Caco-2 (cell line): ENCODE measurements at regions of chr1 and their contacts with region 1.

Region 1: DNA sequence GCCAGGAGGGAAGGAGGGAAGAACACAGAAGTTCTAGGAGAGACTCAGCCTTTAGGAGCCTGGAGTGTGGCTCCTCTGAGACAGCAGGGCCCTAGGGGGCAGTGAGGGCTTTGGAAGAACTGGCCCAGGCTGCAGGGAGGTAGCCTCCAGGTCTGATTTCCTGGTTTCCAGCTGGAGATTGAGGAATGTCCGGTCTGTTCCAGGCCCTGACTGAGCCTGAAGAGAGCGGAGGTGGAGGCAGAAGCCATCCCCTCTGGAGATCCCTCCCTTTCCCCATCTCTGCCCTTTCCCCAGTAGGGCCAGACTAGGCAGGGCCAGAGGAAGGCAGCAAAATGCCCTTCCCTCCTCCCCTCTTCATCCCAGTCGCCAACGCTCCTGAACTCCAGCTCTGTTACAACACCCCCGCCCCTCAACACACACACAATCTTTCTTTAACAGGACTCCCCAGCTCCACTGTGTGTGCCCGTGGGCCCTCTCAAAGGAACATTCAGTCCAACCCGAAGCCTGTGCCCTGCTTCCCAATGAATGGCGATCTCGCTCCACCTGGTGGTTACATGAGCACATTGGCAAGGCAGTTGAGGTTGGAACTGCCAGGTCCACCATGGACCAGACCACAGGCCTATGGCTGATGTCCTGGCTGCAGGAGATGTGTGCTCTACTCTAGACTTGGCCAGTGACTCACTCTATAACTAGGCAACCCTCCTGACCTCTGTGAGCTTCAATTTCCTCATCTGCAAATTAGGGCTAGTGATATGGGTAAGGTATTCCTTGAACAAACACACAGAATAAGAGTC is 32.0 kb downstream of the MAP7D1 start:
- DNase-seq: peak; percentile 74 to 80
- H3K4me3 ChIP-seq: no peak overlapping the region
- H3K4me3 Mint-ChIP-seq: peak overlapping the region; percentile 37
- H3K27ac Mint-ChIP-seq: peak overlapping the region; percentile 76
- H3K4me1 ChIP-seq: no peaks in the 10 kb centered on the region
- H3K4me1 Mint-ChIP-seq: peaks cover 7% of the 10 kb centered on the region
- H3K27me3 ChIP-seq: no peaks in the 10 kb centered on the region
- H3K27me3 Mint-ChIP-seq: no peaks in the 10 kb centered on the region
- CTCF ChIP-seq: peak; percentile 61 to 73

Region 2: GRCh38 chr1:36099681-36100341 is 88.2 kb before region 1 on chr1:
- CTCF ChIA-PET with region 1: interaction called, 4 read pairs
- POLR2A ChIA-PET with region 1: no interaction called
- intact Hi-C with region 1: loop called (anchors 1 kb)
- DNase-seq: peak; percentile 73 to 78
- H3K4me3 ChIP-seq: no peak overlapping the region
- H3K4me3 Mint-ChIP-seq: no peak overlapping the region
- H3K27ac Mint-ChIP-seq: no peak overlapping the region
- H3K4me1 ChIP-seq: no peaks in the 10 kb centered on the region
- H3K4me1 Mint-ChIP-seq: no peaks in the 10 kb centered on the region
- H3K27me3 ChIP-seq: no peaks in the 10 kb centered on the region
- H3K27me3 Mint-ChIP-seq: no peaks in the 10 kb centered on the region
- CTCF ChIP-seq: peak; percentile 78 to 79

Region 3: GRCh38 chr1:36239941-36240637 is 52.1 kb after region 1 on chr1:
- CTCF ChIA-PET with region 1: no interaction called
- POLR2A ChIA-PET with region 1: no interaction called
- intact Hi-C with region 1: loop called (anchors 5 kb)
- DNase-seq: peak in 1 of 2 experiments; percentile 38
- H3K4me3 ChIP-seq: no peak overlapping the region
- H3K4me3 Mint-ChIP-seq: no peak overlapping the region
- H3K27ac Mint-ChIP-seq: no peak overlapping the region
- H3K4me1 ChIP-seq: peaks cover 7% of the 10 kb centered on the region; the same call in 1 of the 2 replicates
- H3K4me1 Mint-ChIP-seq: peaks cover 5% of the 10 kb centered on the region
- H3K27me3 ChIP-seq: no peaks in the 10 kb centered on the region
- H3K27me3 Mint-ChIP-seq: no peaks in the 10 kb centered on the region
- CTCF ChIP-seq: no peak

Region 4: DNA sequence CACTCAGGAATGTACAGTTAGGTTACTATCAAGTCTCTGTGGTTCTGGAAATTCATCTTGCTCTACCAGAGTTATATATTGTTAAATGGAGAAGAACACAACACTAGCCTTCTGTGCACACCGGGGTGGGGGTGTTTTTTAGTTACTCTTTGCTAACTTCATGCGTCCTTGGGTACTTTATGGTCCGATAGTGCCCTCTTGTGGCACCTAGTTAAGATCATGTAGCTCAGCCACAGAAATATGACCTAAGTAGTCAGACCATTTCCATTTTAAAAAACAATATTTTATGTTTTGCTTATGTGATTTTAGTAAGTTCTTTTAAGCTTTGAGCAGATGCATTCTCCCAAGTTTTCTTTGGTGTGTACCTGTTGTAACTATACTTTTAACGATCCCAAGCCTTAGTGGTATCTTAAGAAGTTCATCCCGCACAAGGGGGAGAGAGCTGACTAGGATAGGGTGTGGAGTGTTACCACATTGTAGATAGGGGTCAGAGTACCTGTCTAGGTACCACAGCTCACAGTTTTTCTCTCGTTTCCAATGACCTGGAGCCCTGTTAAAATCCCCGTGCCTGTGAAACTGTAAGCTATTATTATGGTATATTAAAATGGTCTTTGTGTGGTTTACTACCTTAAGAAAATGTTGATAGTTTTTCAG is 97.6 kb after region 1 on chr1:
- CTCF ChIA-PET with region 1: interaction called, 12 read pairs
- POLR2A ChIA-PET with region 1: no interaction called
- intact Hi-C with region 1: no loop called
- DNase-seq: peak; percentile 52 to 58
- H3K4me3 ChIP-seq: no peak overlapping the region
- H3K4me3 Mint-ChIP-seq: no peak overlapping the region
- H3K27ac Mint-ChIP-seq: no peak overlapping the region
- H3K4me1 ChIP-seq: no peaks in the 10 kb centered on the region
- H3K4me1 Mint-ChIP-seq: no peaks in the 10 kb centered on the region
- H3K27me3 ChIP-seq: no peaks in the 10 kb centered on the region
- H3K27me3 Mint-ChIP-seq: no peaks in the 10 kb centered on the region
- CTCF ChIP-seq: peak; percentile 45 to 62